ENCODE measurements at regions of chr2 and their contacts with region 1.

Region 1: GRCh38 chr2:20015472-20016083 is 3.1 kb upstream of the MATN3 start:
- DNase-seq: no peak
- H3K4me3 ChIP-seq: no peak overlapping the region
- CTCF ChIP-seq: peak; percentile 20

Region 2: DNA sequence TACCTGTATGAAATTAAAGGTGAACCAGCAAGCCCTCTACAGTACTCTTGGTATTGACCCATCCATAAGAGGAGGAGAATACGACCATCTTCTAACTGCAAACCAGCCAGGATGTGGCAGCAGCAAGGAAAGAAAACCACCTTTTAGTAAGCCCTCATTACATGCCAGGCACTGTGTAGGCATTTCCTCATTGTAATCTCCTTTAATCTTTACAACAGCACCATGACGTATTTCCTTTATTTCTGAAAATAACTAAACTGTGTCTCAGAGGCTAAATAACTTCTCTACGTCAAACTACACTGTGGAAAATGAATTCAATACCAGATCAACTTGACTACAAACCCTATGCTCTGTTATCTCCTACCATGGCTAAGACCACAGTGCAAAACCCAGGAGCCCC is 43.9 kb before region 1 on chr2:
- CTCF ChIA-PET with region 1: interaction called, 12 read pairs
- POLR2A ChIA-PET with region 1: no interaction called
- DNase-seq: no peak
- H3K4me3 ChIP-seq: no peak overlapping the region
- CTCF ChIP-seq: no peak

Region 3: DNA sequence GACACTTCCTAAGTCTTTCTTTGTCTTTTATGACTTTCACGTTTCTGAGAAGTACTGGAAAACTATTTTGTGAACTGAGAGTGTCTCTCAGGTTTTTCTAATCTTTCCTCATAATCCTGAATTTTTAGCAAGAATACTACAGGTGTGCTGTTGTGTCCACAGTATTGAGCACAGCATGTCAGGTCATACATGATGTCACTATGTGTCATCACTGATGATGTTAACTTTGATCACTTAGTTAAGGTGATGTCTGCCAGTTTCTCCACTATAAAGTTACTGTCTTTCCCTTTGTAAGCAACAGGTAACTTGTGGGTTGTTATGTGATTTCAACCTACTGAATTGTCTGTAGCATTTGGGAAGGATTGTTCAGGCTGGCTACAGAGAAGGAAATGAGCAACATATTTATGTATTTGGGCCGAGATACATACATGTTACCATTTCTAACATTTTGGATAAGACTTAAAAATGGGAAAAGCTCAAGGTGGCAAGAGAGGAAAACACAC is 14.2 kb before region 1 on chr2:
- CTCF ChIA-PET with region 1: interaction called, 58 read pairs
- POLR2A ChIA-PET with region 1: no interaction called
- DNase-seq: no peak
- H3K4me3 ChIP-seq: no peak overlapping the region
- CTCF ChIP-seq: no peak

Region 4: GRCh38 chr2:20051532-20052228 is 36.1 kb after region 1 on chr2 and contains the start of gene LAPTM4A:
- CTCF ChIA-PET with region 1: interaction called, 59 read pairs
- POLR2A ChIA-PET with region 1: no interaction called
- DNase-seq: peak; percentile 100
- H3K4me3 ChIP-seq: peak within 1 kb of the TSS; percentile 88
- CTCF ChIP-seq: peak; percentile 13

Region 5: DNA sequence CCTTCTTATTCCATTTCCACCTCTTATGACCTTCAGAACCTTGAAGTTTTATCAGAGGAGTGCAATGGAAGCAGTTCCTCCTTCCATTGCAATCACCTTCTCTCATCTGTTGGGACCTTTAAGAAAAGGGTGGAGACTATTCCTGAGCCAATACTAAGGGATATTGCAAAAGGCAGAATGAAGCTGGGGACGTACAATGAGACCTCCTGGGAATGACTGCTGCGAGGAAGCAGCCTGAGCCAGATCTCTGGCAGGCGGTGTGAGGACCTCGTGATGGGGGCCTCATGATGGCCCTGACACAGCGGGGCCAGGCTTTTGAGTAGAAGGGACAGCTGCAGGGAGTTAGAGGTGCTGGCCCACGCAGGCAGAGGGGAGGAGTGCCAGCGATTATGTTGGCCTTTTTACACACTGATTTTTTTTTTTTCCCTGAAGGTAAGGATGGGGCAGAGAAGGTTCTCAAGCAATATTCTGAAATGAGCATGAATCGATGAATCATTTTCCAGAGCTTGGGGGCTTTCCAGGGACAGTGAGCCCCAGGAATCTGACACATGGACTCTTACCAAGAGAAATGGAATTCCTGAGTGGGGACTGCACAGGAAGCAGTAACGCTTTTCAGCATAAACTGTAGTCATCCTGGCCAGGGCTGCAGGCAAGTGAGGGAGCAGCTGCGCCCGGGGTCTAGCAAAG is 75.9 kb after region 1 on chr2:
- CTCF ChIA-PET with region 1: interaction called, 349 read pairs
- POLR2A ChIA-PET with region 1: interaction called, 6 read pairs
- DNase-seq: peak; percentile 85
- H3K4me3 ChIP-seq: no peak overlapping the region; the same call in 1 of the 2 replicates
- CTCF ChIP-seq: no peak

Region 6: GRCh38 chr2:20135631-20136050 is 120.1 kb after region 1 on chr2:
- CTCF ChIA-PET with region 1: interaction called, 13 read pairs
- POLR2A ChIA-PET with region 1: no interaction called
- DNase-seq: no peak
- H3K4me3 ChIP-seq: no peak overlapping the region
- CTCF ChIP-seq: peak; percentile 92

Region 7: DNA sequence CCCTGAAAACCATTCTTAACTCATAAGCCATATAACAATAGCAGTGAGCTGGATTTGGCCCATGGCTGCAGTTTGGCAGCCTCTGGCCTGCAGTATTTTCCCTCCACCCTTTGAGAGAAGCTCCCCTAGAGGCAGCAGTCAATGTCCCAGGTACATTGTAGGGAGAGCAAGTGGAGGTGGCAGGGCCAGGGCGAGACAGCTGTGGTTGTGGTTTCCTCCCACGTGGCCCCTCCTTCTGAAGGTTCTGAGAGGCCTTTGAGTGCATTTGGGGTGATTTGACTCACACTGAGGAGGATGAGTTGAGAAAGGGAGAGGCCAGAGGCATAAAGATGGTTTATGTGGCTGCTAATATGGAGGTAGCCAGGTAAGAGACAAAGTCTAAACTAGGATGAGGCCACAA is 852.8 kb after region 1 on chr2:
- CTCF ChIA-PET with region 1: no interaction called
- POLR2A ChIA-PET with region 1: no interaction called
- DNase-seq: no peak
- H3K4me3 ChIP-seq: no peak overlapping the region
- CTCF ChIP-seq: no peak

Measured in AG04449 (cell line).